ENCODE measurements at regions of chr20 and their contacts with region 1.

Region 1: DNA sequence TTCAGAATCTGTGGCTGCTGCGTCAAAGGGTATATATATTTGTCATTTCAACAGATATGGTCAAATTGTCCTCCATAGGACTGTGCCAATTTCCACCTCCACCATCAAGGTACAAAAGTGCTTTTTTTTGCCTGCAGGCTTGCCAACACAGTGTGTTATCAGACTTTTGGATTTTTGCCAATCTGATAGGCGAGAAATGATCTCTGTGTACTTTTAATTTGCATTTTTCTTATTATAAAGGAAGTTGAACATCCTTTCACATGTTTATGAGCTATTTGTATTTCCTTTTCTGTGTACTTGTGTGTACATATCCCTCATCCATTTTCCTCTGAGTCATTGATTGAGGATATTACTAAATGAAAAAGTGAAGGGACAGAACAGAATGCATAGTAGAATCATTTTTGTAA is 39.0 kb upstream of the PTPN1 start:
- DNase-seq: peak; percentile 50
- H3K4me3 Mint-ChIP-seq: no peak overlapping the region
- H3K27ac Mint-ChIP-seq: peak overlapping the region; percentile 42
- H3K4me1 Mint-ChIP-seq: peaks cover 48% of the 10 kb centered on the region
- H3K27me3 Mint-ChIP-seq: no peaks in the 10 kb centered on the region
- CTCF ChIP-seq: no peak

Region 2: DNA sequence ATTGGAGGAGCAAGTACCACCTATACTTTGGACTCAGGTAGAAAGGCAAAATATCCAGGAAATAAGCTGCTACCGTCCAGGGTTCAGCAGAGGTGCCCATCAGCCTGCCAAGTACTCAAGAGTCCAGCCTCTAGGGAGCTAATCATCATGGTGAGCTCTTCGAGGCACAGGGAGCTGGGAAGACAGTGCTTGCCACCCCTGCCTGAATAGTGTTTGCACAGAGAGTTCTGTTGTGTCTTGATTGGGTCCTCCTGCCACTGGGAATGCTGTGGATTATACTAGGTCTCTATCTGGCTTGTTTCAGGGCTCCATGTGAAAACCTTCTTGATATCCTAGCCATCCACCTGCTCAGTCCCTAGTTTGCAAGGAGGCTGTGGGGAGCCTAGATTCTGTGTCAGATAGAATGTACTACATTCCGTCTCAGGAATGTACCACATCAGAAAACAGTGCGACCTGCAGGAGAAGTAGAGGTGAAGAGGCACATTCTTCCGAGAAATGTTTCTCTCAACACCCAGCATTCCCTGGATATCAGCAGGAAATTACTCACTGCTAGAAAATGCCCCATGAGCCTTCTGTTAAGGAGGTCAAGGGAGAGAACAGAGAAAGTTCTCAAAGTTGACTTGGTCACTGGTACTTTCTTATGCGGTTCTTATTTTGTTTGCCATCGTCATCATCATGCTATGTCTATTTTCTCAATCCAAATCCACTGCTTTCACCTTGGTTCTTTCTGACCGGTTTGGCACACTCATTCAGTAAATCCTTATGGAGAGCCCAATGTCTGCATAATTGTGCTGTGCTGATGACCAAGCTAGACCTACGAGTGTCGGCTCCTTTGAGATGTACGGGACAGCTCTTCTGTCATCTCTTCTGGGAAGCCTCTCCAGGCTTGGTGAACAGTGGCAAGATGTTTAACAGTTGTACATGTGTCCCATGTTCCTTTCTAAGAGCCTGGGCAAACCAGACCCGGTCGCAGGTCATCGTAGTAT is 69.7 kb after region 1 on chr20:
- CTCF ChIA-PET with region 1: no interaction called
- intact Hi-C with region 1: loop called (anchors 5 kb)
- DNase-seq: peak; percentile 76
- H3K4me3 Mint-ChIP-seq: peak overlapping the region; percentile 56
- H3K27ac Mint-ChIP-seq: peak overlapping the region; percentile 79
- H3K4me1 Mint-ChIP-seq: peaks cover 78% of the 10 kb centered on the region
- H3K27me3 Mint-ChIP-seq: no peaks in the 10 kb centered on the region
- CTCF ChIP-seq: no peak